ENCODE measurements at regions of chr12 and their contacts with region 1.

Region 1: GRCh38 chr12:1939801-1940607 is 21.6 kb upstream of the CACNA2D4 start:
- DNase-seq: peak; percentile 89
- ATAC-seq: peak; percentile 77 to 90
- H3K4me3 ChIP-seq: no peak overlapping the region
- H3K27ac ChIP-seq: no peak overlapping the region
- H3K4me1 ChIP-seq: peaks cover 11% of the 10 kb centered on the region
- H3K27me3 ChIP-seq: no peaks in the 10 kb centered on the region
- CTCF ChIP-seq: peak; percentile 99

Region 2: DNA sequence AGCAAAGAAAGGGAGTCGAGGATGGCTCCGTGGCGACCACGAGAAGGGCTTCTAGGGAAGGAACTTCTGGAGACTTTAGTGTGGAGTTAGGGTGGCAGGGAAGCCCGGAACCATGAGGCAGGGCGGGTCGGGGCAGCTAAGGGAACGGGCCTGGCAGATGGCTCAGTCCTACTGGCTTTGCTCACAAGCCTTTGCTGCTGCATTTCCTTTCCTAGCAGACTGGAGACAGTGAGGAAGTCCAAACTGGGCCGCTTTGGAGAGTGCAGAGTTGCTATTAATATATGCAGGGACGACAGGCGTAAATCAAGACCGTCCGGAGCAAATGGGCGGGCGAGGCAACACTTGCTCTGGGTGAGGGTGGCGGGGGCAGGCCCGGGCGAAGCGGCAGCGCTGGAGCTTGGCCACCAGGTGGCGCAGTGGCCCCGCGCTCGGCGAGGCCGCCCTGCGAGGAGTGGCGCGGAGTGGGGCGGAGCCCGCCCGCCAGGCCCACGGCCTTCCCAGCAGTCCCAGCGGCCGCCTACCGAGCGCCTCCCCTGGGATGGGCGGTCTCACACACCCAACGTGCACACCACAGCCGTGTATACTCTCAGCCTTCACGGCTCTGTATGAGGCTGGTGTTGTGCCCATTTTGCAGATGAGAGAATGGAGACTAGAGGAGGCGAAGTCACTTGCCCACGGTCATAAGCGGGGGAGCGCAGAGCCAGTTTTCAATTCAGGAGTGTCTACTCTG is 144.1 kb before region 1 on chr12:
- intact Hi-C with region 1: loop called (anchors 10 kb)
- DNase-seq: peak; percentile 97
- ATAC-seq: peak; percentile 97 to 98
- H3K4me3 ChIP-seq: peak overlapping the region; percentile 68
- H3K27ac ChIP-seq: peak overlapping the region; percentile 87
- H3K4me1 ChIP-seq: peaks cover 26% of the 10 kb centered on the region
- H3K27me3 ChIP-seq: no peaks in the 10 kb centered on the region
- CTCF ChIP-seq: peak; percentile 99

Measured in lower lobe of right lung (tissue), 2 donors.